ENCODE measurements at regions of chrX and their contacts with region 1.

Region 1: GRCh38 chrX:19544693-19545305 is 29.5 kb upstream of the MAP3K15 start:
- DNase-seq: peak; percentile 43
- H3K4me3 ChIP-seq: no peak overlapping the region
- H3K27ac ChIP-seq: no peak overlapping the region
- H3K4me1 ChIP-seq: no peaks in the 10 kb centered on the region
- H3K27me3 ChIP-seq: no peaks in the 10 kb centered on the region
- CTCF ChIP-seq: peak; percentile 44 to 72 (median 56)
- EP300 ChIP-seq: no peak
- POLR2A ChIP-seq: no peak

Region 2: GRCh38 chrX:19280636-19281035 is 264.2 kb before region 1 on chrX:
- in situ Hi-C with region 1: no loop called
- intact Hi-C with region 1: no loop called
- DNase-seq: no peak
- H3K4me3 ChIP-seq: no peak overlapping the region
- H3K27ac ChIP-seq: no peak overlapping the region
- H3K4me1 ChIP-seq: no peaks in the 10 kb centered on the region
- H3K27me3 ChIP-seq: no peaks in the 10 kb centered on the region
- CTCF ChIP-seq: no peak
- EP300 ChIP-seq: no peak
- POLR2A ChIP-seq: no peak

Region 3: DNA sequence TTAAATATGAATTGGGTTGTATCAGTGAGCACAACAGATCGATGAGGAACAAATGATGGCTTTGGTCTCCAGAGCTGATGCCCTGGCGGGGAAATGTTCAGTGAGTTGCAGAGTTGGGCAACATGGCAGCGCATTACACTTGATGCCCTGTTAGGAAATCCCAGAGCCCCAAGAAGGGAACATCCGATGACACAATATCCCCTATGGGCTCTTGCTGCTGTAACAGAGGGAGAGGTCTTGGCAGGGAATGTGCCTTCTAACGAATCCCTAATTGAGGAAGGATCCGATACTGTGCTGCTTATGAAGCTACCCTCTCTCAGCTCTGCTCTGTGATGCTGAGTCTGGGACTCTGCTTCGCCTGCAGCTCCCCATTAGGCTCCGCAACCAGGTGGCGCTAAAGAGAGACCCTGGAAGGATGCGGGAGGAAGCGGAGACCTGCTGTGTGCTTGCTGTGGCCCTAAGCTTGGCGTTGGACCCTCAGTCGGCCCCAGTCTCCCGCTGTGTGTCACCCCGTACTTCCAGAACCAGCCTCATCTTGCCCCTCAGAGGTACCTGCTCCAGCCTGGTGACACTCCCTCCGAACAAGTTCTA is 162.1 kb before region 1 on chrX:
- in situ Hi-C with region 1: loop called in 2 of 4 experiments (anchors 25 kb)
- intact Hi-C with region 1: no loop called
- DNase-seq: peak; percentile 52
- H3K4me3 ChIP-seq: no peak overlapping the region
- H3K27ac ChIP-seq: no peak overlapping the region
- H3K4me1 ChIP-seq: no peaks in the 10 kb centered on the region
- H3K27me3 ChIP-seq: no peaks in the 10 kb centered on the region
- CTCF ChIP-seq: peak; percentile 22 to 42 (median 26)
- EP300 ChIP-seq: no peak
- POLR2A ChIP-seq: no peak